ENCODE measurements at regions of chr3 and their contacts with region 1.

Region 1: GRCh38 chr3:136196401-136197158 is 445 bp upstream of the MSL2 start:
- DNase-seq: peak; percentile 99
- ATAC-seq: peak; percentile 90

Region 2: DNA sequence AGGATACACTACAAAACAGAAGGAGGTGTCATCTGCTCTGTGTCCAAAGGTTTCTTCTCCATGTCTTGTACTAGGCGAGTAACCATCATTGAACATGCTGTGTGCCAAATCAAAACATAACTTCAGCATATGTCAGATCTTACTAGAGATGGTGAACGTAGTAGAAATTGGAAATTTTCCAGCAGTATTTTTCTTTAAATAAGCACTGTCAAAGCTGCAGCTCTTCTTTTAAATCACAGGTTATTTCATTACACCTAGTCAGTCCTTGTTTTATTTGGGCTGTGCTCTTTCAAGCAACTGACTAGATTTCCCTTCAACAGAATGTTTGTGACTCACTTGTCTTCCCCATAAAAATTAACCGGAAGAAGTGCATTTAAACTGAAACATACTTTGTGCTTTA is 46.9 kb before region 1 on chr3:
- intact Hi-C with region 1: loop called (anchors 5 kb)
- DNase-seq: no peak
- ATAC-seq: no peak

Region 3: DNA sequence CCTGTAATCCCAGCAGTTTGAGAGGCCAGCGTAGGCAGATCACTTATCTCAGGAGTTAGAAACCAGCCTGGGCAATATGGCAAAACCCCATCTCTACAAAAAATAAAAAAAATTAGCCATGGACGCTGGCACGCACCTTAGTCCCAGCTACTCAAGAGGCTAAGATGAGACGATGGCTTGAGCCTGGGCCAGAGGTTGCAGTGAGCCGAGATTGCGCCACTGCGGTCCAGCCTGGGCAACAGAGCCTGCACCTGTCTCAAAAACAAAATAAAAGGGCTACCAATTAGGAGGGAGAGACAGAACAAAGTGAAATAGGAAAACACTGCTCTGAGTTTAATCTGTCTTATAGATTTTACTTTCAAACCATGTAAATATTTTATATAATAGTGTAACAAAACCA is 34.3 kb before region 1 on chr3:
- intact Hi-C with region 1: loop called (anchors 5 kb)
- DNase-seq: peak; percentile 69
- ATAC-seq: no peak

Region 4: GRCh38 chr3:136177876-136178275 is 18.7 kb before region 1 on chr3:
- intact Hi-C with region 1: no loop called
- DNase-seq: no peak
- ATAC-seq: no peak

Region 5: DNA sequence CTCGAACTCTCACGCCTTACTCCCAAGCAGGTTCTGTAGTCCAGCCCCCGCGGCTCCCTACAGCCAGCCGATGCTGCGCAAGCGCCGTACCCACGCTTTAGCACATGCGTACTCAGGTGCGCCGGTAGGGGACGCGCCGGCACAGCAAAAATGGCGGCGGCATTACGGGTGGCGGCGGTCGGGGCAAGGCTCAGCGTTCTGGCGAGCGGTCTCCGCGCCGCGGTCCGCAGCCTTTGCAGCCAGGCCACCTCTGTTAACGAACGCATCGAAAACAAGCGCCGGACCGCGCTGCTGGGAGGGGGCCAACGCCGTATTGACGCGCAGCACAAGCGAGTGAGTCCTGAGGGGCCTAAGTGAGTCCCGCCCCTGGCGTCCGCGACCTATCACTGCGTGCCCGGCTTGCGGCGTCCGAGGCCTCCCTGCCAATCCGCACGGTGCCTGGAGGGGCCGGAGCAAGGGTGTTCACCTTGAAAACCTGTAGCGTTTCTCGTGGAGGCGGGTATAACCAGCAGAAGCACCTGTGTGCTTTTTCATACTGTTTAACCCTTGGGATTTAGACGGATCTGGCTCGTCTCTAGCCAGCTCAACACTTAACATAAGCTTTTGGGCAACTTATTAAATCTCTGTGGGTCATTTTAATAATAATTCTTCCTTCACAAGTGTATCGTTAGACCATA is 53.8 kb after region 1 on chr3 and contains the start of gene PCCB:
- intact Hi-C with region 1: loop called (anchors 1 kb)
- DNase-seq: peak; percentile 98
- ATAC-seq: peak; percentile 99
- total RNA-seq, gene PCCB: 98.6 TPM

Measured in Right ventricle myocardium inferior (tissue), 1 donor.